ENCODE measurements at regions of chr1 and their contacts with region 1.

Region 1: DNA sequence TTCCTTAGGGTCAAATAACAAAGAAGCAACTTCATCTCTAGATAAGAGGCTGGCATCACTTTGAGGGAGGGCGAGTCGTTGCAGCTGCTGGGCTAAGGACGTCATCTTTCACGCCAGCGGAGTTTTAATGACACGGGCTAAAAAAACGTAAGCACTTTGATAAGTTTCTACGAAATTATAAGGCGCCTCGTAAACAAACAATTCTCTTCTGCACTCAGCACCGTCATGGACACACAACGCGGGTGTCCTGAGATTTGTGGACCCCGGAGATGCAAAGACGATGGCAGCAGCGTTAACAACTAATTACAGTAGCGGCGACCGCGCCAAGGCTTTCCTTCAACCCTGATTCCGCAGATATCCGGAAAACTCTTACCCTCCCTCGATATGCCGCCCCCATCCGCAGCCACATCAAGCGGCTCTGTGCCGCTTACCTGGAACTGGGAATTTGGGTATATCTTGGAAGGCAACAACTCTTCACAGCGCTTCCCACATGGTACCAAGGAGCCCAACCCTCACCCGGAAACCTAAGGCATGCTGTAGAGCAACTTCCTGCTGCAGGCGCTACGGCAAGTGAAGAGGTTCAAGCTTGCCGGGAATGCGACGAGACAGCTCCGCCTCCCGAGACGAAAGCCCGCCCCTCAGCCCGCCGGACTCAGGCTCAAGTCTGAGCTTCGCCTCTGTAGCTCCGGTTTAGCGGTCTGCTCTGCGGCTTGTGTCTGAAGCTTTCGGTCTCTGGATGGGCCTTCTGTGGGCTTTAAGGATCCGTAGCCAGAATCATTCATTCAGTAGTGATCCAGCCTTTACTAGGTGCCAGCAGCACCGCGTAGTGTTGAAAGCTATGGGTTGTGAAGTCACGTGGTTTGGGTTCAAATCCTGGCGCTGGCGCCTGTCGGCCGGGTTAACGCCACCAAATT is at the start of gene HEATR1:
- ATAC-seq: peak; percentile 94 to 99 (median 99)
- H3K4me3 ChIP-seq: peak within 1 kb of the TSS; percentile 60 to 78 (median 74)
- H3K27ac ChIP-seq: peak within 1 kb of the TSS; percentile 36 to 37
- H3K4me1 ChIP-seq: peaks cover 3 to 8% of the 10 kb centered on the region in 2 donors
- total RNA-seq, gene HEATR1: 17.4 to 51.4 (median 31.4) TPM

Region 2: DNA sequence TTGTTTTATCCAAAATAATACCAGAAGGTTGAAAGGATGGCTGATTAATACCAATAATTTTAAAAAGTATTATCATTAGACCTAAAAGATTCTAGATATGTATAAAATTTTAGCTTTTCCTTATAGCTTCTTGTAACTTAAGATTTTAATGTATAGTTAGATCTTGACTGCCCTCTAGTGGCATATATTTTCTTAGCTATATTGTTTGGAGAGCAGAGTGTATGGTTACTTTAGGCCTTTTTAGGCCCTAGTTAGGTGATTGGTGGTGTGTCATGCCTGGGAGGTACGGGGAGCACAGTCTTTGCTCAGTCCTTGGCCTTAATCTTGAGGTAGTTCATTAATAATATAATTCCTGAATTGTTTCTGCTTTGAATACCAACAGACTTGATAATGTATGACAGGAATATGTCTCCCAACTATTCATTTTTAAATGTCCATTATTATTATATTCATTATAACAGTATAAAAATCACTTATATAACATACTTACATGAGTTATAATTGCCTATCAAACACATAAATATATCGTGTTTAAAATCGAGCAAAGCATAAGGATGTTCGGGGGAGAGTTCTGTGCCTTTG is 958.1 kb after region 1 on chr1:
- in situ Hi-C with region 1: loop called in 2 of 9 experiments (anchors 25 kb)
- ATAC-seq: peak in 5 of 8 experiments; percentile 39 to 79 (median 68)
- H3K4me3 ChIP-seq: no peak overlapping the region
- H3K27ac ChIP-seq: no peak overlapping the region
- H3K4me1 ChIP-seq: no peaks in the 10 kb centered on the region